ENCODE measurements at regions of chr6 and their contacts with region 1.

Region 1: GRCh38 chr6:28981833-28982475 is 23.2 kb downstream of the ZNF311 start:
- DNase-seq: peak; percentile 91
- H3K4me3 ChIP-seq: peak overlapping the region; percentile 92 to 95 (median 95)
- H3K27ac ChIP-seq: peak overlapping the region; percentile 63
- H3K4me1 ChIP-seq: peaks cover 31% of the 10 kb centered on the region
- H3K27me3 ChIP-seq: no peaks in the 10 kb centered on the region
- CTCF ChIP-seq: no peak

Region 2: GRCh38 chr6:28789553-28790083 is 192.3 kb before region 1 on chr6:
- CTCF ChIA-PET with region 1: no interaction called
- dilution Hi-C with region 1: no loop called
- in situ Hi-C with region 1: no loop called
- intact Hi-C with region 1: loop called (anchors 5 kb)
- DNase-seq: peak; percentile 76
- H3K4me3 ChIP-seq: peak overlapping the region; percentile 49 to 72 (median 54)
- H3K27ac ChIP-seq: no peak overlapping the region
- H3K4me1 ChIP-seq: peaks cover 5% of the 10 kb centered on the region
- H3K27me3 ChIP-seq: peaks cover 32% of the 10 kb centered on the region
- CTCF ChIP-seq: no peak

Region 3: DNA sequence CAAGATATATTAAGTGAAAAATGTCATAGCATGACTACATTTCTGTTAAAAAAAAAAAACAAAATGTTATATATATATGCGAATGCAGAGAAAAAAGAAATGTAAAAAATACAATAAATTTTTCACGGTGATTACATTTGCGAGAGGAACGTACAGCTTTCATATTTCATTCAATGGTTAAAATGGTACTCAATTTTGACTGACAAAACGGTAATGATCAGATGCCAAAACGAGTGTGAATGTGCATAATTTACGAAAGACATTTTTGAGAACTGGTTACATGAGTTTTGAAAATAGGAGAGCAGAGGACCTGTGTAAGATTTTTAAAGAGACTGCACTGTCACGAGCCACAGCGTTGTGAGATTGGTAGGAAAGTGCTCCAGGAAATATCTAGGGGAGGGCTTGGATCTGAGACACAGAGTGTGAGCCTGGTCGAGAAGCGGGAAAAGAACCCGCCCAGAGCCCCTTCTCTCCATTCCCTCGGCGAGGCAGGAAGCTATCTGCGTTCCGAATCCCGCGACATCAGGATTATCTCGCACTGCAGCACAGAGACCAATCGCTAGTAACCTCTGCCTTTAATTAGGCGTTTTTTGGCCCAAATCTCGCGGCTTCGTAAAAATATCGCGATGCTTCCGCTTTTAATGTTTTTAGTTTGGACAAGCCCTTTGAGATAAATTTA is 86.7 kb before region 1 on chr6:
- CTCF ChIA-PET with region 1: no interaction called
- dilution Hi-C with region 1: no loop called
- in situ Hi-C with region 1: no loop called
- intact Hi-C with region 1: loop called (anchors 1 kb)
- DNase-seq: peak; percentile 94
- H3K4me3 ChIP-seq: peak overlapping the region; percentile 64 to 80 (median 76)
- H3K27ac ChIP-seq: peak overlapping the region; percentile 98
- H3K4me1 ChIP-seq: no peaks in the 10 kb centered on the region
- H3K27me3 ChIP-seq: peaks cover 1% of the 10 kb centered on the region
- CTCF ChIP-seq: no peak

Region 4: DNA sequence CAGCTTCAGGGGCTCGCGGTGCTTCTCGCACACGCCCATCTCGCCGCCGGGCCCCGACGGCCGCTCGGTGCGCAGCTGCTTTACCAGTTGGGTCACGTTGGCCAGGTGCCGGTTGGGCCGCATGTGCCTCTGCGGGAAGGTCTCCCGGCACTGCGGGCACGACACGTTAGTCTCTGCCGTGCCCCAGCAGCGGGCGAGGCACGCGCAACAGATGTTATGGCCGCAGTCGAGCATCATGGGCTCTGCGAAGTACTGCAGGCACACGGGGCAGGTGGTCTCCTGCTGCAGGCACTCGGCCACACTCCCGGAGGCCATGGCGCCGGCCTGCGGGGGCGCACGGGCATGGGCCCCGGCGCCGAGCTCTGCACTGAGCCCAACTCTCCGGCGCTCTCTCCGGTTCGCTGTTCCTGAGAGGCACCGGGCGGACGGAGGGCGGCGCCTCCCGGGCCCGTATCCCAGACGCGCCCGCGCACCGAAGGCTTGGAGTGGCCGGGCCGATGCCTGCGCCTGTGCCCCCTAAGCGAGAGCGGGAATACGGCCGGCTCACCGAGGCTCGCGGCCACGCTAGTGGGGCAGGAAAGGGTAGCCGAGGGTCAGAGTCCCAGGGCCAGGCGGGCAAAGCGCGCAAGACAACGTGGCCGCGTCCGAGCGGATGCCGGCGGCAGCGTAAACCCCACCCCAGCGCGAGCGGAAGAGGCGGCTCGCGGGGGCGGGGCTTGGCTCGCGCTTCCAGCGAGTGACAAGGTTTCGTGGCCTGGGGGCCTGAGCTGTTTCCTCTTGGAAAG is 58.4 kb before region 1 on chr6 and contains the start of gene TRIM27:
- CTCF ChIA-PET with region 1: no interaction called
- dilution Hi-C with region 1: no loop called
- in situ Hi-C with region 1: no loop called
- intact Hi-C with region 1: loop called (anchors 1 kb)
- DNase-seq: peak; percentile 81
- H3K4me3 ChIP-seq: peak within 1 kb of the TSS; percentile 67 to 88 (median 73)
- H3K27ac ChIP-seq: peak within 1 kb of the TSS; percentile 82
- H3K4me1 ChIP-seq: peaks cover 19% of the 10 kb centered on the region
- H3K27me3 ChIP-seq: no peaks in the 10 kb centered on the region
- CTCF ChIP-seq: peak in 1 of 2 donors; percentile 2
- total RNA-seq, gene TRIM27: 45.3 to 49.2 TPM

Region 5: DNA sequence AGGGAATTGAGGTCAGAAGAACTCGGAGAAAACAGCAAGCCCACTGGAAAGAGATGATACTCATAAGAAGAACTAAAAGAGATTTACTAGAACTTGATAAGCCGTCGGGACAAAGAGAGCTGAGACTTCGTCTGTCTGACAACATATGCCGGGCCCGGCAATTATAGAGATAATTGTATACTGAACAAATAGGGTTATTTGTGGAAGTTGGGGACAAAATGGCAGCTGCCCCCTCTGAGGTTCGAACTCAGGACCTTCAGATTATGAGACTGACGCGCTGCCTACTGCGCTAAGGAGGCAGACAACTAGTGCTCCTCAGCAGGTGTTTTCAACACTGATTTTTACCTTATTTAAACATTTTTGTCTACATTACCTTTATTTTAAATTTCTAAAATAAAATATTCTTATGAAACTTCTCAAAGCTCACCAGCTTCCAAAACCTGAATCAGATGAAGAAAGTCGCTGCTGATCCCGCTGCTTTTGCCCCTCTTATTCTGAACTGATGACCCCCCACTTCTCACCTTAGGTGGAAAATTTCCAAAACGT is 28.8 kb before region 1 on chr6:
- CTCF ChIA-PET with region 1: no interaction called
- dilution Hi-C with region 1: no loop called
- in situ Hi-C with region 1: no loop called
- intact Hi-C with region 1: loop called (anchors 1 kb)
- DNase-seq: peak; percentile 59
- H3K4me3 ChIP-seq: peak overlapping the region; percentile 51 to 68 (median 63)
- H3K27ac ChIP-seq: peak overlapping the region; percentile 2
- H3K4me1 ChIP-seq: peaks cover 3% of the 10 kb centered on the region
- H3K27me3 ChIP-seq: no peaks in the 10 kb centered on the region
- CTCF ChIP-seq: no peak

Region 6: GRCh38 chr6:29005183-29005885 is 23.4 kb after region 1 on chr6 and contains the start of gene ZNF311:
- CTCF ChIA-PET with region 1: no interaction called
- dilution Hi-C with region 1: no loop called
- in situ Hi-C with region 1: no loop called
- intact Hi-C with region 1: loop called (anchors 1 kb)
- DNase-seq: peak; percentile 69
- H3K4me3 ChIP-seq: peak within 1 kb of the TSS; percentile 67 to 89 (median 84)
- H3K27ac ChIP-seq: no peak within 1 kb of the TSS
- H3K4me1 ChIP-seq: peaks cover 3% of the 10 kb centered on the region
- H3K27me3 ChIP-seq: no peaks in the 10 kb centered on the region
- CTCF ChIP-seq: no peak
- total RNA-seq, gene ZNF311: 2.0 to 4.0 TPM

Region 7: DNA sequence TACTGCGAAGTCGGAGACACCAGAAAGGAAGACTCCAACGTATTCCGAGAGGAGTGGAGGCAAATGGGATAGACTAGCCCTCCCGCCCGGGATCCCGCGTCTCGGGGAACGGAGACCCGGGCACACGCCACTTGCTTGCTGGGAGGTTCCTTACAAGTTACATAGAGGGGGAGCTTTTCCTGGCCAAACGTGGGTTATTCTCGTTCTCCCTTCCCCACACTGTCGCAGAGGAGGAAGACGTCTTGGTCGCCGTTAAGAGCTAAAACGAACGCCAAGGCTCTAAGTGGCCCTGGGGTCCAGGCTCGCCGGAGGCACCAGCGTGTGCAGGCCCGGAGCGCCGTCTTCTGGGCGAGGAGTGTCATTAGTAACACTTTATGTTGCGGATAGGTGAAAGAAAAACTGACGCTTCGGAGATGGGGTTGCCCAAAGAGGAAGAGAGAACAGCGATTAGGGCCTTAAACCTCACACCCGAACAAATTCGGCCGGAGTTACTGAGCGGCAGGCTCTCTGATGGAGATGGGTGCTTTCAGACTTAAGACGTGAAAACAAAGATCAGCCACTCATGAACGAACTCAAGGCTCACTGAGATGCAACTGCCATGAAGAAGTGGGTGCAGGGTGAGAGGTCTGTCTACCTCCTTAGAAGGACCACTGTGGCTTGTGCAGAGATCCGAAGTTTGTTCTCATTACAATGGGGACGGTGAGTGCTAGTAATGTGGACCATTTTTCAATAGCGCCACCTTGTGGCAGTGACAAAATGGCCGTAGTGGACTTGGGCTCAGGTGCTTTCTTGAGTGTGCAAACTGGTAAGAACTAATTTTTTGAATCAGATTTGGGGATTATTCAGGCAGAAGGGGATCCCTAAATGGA is 34.8 kb after region 1 on chr6:
- CTCF ChIA-PET with region 1: no interaction called
- dilution Hi-C with region 1: no loop called
- in situ Hi-C with region 1: no loop called
- intact Hi-C with region 1: loop called (anchors 1 kb)
- DNase-seq: peak; percentile 66
- H3K4me3 ChIP-seq: peak overlapping the region; percentile 53 to 57 (median 54)
- H3K27ac ChIP-seq: no peak overlapping the region
- H3K4me1 ChIP-seq: peaks cover 9% of the 10 kb centered on the region
- H3K27me3 ChIP-seq: no peaks in the 10 kb centered on the region
- CTCF ChIP-seq: peak; percentile 84 to 93

Measured in mammary epithelial cell (primary cell).